Posterior cingulate gyrus (tissue), 11 donors: ENCODE measurements at regions of chr7 and their contacts with region 1.

Region 1: DNA sequence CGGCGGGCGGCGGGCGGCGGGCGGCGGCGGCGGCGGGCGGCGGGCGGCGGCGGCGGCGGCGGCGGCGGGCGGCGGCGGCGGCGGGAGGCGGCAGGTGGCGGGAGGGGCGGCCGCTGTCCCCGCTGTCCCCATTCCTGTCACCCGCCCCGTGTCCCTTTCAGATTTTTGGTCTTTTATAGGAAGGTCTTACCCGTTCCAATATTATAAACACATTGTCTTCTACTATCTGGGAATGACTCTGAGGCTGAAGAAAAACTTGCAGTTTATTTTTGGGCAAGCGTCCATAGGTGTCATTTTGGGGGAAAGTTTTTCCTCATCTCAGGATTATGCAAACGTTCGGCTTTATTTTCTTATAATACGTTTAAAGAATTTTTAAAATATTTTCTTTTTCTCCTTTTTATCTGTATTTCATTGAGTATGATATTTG is 578 bp downstream of the ZNF713 start:
- DNase-seq: no peak

Region 2: DNA sequence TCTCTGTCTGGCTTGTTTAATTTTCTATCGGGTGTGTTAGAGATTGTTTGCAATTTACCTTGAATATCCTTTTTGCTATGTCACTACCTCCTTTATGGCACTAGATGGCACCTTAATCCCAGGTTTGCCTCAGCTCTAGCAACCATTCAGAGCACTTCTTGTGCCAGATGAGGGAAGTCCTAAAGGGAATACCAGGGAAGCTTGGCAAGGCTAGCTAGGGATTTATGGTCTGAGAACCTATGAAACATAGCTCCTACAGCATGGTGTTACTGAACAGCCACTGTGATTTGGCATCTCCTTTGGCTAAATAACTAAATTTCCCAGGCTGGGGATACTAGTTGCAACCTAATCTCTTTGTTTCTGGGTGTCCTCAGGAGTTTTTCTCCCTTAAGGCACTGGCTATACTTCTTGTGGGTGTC is 246.6 kb before region 1 on chr7:
- intact Hi-C with region 1: loop called (anchors 5 kb)
- DNase-seq: peak in 1 of 10 donors; percentile 12

Region 3: DNA sequence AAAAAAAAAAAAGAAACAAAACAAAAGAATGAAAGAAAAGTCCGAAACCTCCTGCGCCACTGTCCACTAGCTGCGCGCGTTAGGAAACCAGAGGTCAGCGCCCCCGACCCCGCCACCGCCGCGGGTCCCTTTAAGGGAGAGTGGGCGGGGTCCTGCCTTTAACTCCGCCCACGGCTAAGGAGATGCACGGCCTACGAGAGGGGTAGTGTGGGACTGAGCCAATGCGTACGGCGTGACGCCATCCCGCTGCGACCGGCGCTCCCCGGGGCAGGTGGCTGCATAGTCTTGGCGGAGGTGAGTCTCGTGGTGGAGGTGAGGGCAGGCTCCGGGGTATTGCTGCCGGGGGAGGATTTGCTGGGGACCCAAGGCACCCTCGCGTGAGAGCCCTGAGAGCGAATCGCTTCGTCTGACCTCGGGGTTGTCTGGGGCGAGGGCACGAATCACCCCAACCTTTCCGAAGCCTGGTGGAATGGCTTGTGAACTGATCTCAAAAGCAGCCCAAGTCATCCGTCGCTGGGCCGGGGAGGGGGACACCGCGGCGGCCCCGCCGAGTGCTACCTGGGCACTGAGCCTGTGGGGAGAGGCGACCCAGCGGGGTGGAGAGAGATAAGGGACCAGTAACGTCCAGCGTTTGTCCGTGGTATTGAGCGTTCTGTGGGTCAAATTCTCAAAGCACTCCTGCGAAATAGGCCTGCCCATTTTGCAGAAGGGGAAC is 64.0 kb after region 1 on chr7 and contains the start of gene MRPS17:
- intact Hi-C with region 1: loop called (anchors 1 kb)
- DNase-seq: peak; percentile 85 to 99 (median 94)